A549 (cell line): ENCODE measurements at regions of chr3 and their contacts with region 1.

Region 1: DNA sequence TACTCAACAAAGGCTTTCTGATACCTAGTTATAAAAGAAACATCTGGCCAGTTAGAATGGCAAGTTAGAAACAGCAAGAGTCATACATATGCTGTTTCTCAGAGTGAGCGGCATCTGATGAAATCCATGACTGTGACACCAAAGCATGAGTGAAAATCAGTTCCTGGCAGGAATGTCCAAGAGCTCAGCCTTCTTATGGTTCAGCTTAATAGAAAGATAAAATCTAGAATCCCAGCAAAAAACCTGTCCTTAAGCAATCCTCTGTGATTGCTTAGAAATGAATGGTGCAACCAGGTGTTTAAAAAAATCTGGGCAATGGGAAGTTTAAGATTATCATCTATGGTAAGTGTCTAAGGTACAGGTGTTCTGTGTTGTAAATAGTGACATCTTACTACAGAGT is 18.8 kb downstream of the B4GALT4 start:
- DNase-seq: no peak
- ATAC-seq: no peak
- H3K4me3 ChIP-seq: no peak overlapping the region
- H3K27ac ChIP-seq: no peak overlapping the region; a peak in 1 of 6 replicates
- H3K4me1 ChIP-seq: peaks cover 61% of the 10 kb centered on the region
- CTCF ChIP-seq: no peak
- EP300 ChIP-seq: no peak
- POLR2A ChIP-seq: no peak
- RAD21 ChIP-seq: no peak

Region 2: DNA sequence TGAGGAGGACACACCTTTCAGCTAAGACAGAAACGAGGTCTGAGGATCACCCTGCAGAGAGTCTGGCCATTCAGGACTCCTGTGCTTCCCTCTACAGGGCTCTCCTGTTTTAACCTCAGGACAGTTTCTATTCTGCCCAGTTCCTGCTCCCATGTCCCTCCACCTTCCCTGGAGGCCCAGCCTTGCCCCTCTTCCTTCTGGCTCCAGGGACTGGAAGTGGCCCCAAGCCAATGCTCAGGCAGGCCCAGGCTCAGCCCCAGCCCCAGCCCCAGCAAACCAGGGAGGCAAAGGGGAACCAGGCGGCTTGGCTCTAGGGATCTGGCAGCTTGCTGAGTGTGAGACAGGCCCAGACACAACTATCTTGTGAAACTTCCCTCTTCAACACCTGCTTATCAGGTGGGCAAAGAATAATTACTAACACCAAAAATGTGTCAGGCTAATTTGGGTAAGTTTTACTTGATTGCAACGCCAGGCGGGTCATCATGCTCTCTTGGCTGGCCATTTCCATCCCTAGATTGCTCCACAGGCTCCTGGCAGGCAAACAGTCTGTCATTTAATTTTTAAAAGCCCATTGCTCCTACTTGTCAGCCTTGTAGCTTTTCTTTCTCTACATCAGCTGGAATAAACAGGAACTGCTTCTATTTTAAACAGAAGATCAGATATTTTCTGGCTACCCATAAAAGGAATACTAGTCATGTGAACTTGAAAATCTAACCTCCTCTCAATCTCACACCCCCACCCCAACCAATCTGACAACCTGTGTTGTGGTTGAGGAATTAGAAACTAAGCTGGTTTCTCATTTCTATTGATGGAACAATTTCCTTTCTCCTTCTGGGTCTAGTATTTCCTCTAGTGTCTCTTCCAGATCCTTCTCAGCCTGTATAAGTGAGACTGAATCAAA is 15.0 kb before region 1 on chr3:
- CTCF ChIA-PET with region 1: interaction called, 28 read pairs
- POLR2A ChIA-PET with region 1: no interaction called
- DNase-seq: peak; percentile 66 to 85
- ATAC-seq: peak; percentile 81 to 82
- H3K4me3 ChIP-seq: no peak overlapping the region
- H3K27ac ChIP-seq: peak overlapping the region; percentile 90 to 91
- H3K4me1 ChIP-seq: peaks cover 79% of the 10 kb centered on the region
- CTCF ChIP-seq: peak; percentile 29; the same call in 2 of the 3 replicates
- EP300 ChIP-seq: no peak
- POLR2A ChIP-seq: no peak
- RAD21 ChIP-seq: peak; percentile 49 to 60

Region 3: DNA sequence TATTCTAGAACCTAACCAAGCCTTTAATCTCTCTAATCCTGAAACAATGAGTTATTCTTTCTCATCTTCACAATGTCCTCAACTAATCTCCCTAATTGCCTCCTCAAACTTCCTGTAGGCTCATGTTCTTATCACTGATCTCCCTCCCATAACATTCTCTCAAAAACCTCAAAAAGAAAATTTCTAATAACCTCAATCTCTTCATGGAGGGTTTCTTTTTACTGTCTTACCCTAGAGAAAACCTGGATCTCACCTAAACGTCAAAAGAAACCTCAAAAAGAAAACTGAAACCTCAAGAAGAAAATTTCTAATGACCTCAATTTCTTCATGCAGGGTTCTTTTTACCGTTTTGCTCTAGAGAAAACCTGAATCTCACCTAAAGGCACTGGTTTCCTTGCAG is 722.3 kb after region 1 on chr3:
- CTCF ChIA-PET with region 1: no interaction called
- POLR2A ChIA-PET with region 1: no interaction called
- DNase-seq: no peak
- ATAC-seq: no peak
- H3K4me3 ChIP-seq: no peak overlapping the region
- H3K27ac ChIP-seq: no peak overlapping the region
- H3K4me1 ChIP-seq: no peaks in the 10 kb centered on the region
- CTCF ChIP-seq: no peak
- EP300 ChIP-seq: no peak
- POLR2A ChIP-seq: no peak
- RAD21 ChIP-seq: no peak